PC-9 (cell line): ENCODE measurements at regions of chr10 and their contacts with region 1.

Region 1: DNA sequence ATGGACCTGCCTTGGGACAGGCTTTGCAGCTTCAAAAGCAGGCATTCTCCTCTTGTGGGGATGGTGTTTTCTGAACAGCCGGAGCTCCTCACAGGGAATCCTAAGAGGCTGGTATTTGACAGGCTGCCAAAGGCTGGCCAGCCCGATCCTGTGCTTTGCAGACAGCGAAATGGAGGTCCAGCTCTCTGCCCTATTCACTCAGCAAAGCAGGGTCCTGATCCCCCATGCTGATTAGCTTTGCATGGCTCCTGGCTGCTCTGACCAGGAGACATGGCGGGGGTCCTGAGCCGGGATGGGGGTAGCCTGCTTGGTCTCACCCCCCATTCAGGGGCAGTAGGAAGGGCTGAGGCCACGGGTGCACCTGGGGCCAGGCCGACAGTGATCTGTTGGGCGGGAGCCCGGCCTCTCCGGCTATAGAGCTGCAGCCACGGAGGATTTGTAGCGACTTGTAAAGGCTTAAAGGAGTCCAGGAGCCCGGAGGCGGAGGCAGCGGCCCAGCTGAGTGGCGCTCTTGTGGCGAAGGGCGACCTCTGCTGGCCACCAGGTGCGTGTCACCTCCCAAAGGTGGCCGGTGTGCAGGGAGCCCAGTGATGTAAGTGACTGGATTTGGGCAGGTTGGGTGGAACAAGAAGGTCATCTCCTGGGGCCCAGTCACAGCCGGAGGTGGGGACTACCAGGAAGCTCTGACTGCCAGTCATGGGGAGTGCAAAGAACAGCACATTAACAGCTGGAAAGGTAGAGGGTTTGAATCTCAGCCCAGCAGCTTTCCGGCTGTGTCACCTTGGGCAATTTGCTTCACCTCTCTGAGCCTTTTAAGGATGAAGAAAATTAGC is 126.5 kb downstream of the ZMIZ1 start:
- DNase-seq: peak; percentile 76 to 89
- H3K4me3 ChIP-seq: no peak overlapping the region
- H3K27ac ChIP-seq: no peak overlapping the region
- H3K4me1 ChIP-seq: peaks cover 33% of the 10 kb centered on the region
- H3K27me3 ChIP-seq: no peaks in the 10 kb centered on the region
- CTCF ChIP-seq: peak; percentile 99

Region 2: DNA sequence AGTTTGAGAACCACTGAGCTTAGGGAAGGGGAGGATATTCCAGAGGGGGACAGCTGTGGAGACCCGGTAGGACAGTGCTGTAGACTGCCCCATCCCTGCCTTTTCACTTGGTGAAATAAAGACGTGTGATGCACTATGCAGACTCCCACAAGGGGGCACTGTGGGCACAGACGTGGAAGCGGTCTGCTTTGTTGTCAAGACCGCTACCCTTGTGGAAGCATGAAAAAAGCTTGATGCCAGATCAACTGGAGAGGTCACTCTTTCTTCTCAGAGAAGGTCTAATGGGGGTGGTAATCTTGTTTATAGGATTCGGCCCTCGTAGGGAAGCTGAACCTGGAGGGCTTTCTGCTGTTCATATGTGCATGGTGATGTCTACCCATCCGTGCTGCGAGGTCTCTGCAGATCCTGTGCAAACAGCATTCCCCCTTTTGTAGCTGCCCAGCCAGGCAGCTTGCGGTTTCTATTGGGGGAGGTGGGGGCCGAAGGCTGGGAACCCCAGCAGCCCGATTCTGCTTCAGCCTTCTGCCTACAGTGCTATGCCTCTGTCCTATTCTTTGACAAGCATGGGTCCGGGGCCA is 1147.9 kb before region 1 on chr10:
- CTCF ChIA-PET with region 1: interaction called, 3 read pairs
- POLR2A ChIA-PET with region 1: no interaction called
- intact Hi-C with region 1: loop called (anchors 1 kb)
- DNase-seq: peak; percentile 68 to 86
- H3K4me3 ChIP-seq: no peak overlapping the region
- H3K27ac ChIP-seq: no peak overlapping the region
- H3K4me1 ChIP-seq: no peaks in the 10 kb centered on the region
- H3K27me3 ChIP-seq: no peaks in the 10 kb centered on the region
- CTCF ChIP-seq: peak; percentile 96

Region 3: DNA sequence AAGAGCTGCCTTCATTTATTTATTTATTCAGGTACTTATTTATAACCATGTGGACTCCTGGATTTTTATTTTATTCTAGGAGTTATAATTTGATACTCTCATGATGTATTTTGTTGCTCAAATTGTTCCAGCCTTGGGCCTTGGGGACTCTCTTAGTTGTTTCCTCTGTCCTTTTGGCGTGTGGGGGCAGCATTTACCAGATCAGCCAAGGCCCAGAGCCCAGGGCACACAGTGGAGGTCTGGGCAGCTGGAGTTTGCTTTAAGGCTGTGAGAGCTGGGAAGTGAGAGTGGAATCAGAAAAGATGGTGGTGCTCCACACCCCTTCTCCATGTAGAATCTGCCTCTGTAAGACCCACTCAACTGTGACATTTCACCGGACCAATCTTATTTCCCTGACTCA is 762.7 kb before region 1 on chr10:
- CTCF ChIA-PET with region 1: no interaction called
- POLR2A ChIA-PET with region 1: no interaction called
- intact Hi-C with region 1: loop called (anchors 5 kb)
- DNase-seq: no peak
- H3K4me3 ChIP-seq: no peak overlapping the region
- H3K27ac ChIP-seq: no peak overlapping the region
- H3K4me1 ChIP-seq: 0 out of 2 replicates have a peak, but pooled peaks cover 4% of the 10 kb centered on the region
- H3K27me3 ChIP-seq: peaks cover 18% of the 10 kb centered on the region; the same call in 1 of the 2 replicates
- CTCF ChIP-seq: no peak

Region 4: GRCh38 chr10:78756604-78757349 is 438.5 kb before region 1 on chr10:
- CTCF ChIA-PET with region 1: no interaction called
- POLR2A ChIA-PET with region 1: no interaction called
- intact Hi-C with region 1: loop called (anchors 5 kb)
- DNase-seq: peak; percentile 86 to 96
- H3K4me3 ChIP-seq: 0 out of 2 replicates have a peak overlapping the region, but pooled peaks have one; percentile 3
- H3K27ac ChIP-seq: peak overlapping the region; percentile 41
- H3K4me1 ChIP-seq: peaks cover 32% of the 10 kb centered on the region
- H3K27me3 ChIP-seq: no peaks in the 10 kb centered on the region
- CTCF ChIP-seq: no peak

Region 5: DNA sequence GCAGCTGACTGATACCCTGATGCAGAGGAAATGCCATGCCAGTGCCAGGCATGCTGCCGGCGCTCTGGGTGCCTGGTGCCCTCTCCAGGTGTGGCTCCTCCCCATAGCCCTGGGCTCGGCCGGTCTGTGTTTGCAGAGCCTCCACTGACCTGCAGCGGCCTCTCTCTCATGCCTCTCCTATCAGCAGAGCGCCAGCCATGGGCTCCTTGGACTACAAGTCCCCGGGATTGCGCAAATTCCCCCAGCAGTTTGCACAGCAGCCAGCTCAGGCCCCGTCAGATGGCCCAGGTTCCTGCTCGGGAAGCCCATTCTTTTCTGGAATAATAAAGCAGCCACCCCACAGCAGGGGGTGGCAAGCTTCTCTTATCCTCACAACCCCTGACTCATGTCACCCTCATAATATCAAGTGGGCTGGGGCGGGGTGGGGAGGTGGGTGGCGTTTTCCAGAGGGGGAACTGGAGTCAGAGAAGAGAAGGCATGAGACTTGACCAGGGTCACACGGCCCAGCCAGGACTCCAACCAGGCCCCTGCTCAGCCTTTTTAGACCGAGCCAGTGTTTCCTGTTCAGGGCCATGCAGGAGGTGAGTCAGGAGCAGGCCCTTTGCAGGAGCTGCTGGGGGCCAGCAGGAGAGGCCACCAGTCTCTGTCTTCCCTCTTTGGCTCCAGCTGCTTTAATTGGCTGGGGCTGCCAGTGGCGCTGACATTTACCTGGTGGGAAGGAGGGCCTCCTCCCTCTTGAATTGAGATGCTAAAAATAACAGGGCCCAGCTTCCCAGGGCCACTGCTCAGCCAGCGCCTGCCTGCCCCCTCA is 68.0 kb before region 1 on chr10:
- CTCF ChIA-PET with region 1: no interaction called
- POLR2A ChIA-PET with region 1: no interaction called
- intact Hi-C with region 1: loop called (anchors 1 kb)
- DNase-seq: peak; percentile 91 to 95
- H3K4me3 ChIP-seq: no peak overlapping the region
- H3K27ac ChIP-seq: peak overlapping the region; percentile 44
- H3K4me1 ChIP-seq: peaks cover 61% of the 10 kb centered on the region
- H3K27me3 ChIP-seq: no peaks in the 10 kb centered on the region
- CTCF ChIP-seq: no peak; the same call in 1 of the 2 replicates

Region 6: GRCh38 chr10:79242620-79243152 is 47.4 kb after region 1 on chr10:
- CTCF ChIA-PET with region 1: no interaction called
- POLR2A ChIA-PET with region 1: no interaction called
- intact Hi-C with region 1: no loop called
- DNase-seq: peak; percentile 62 to 72
- H3K4me3 ChIP-seq: peak overlapping the region; percentile 66
- H3K27ac ChIP-seq: no peak overlapping the region
- H3K4me1 ChIP-seq: peaks cover 32% of the 10 kb centered on the region
- H3K27me3 ChIP-seq: no peaks in the 10 kb centered on the region
- CTCF ChIP-seq: no peak

Region 7: GRCh38 chr10:79266543-79267312 is 71.4 kb after region 1 on chr10:
- CTCF ChIA-PET with region 1: interaction called, 3 read pairs
- POLR2A ChIA-PET with region 1: interaction called, 24 read pairs
- intact Hi-C with region 1: no loop called
- DNase-seq: peak in 1 of 2 experiments; percentile 62
- H3K4me3 ChIP-seq: no peak overlapping the region
- H3K27ac ChIP-seq: no peak overlapping the region
- H3K4me1 ChIP-seq: peaks cover 41% of the 10 kb centered on the region
- H3K27me3 ChIP-seq: no peaks in the 10 kb centered on the region
- CTCF ChIP-seq: no peak